ENCODE measurements at regions of chr4 and their contacts with region 1.

Region 1: GRCh38 chr4:24404281-24404680 is 180.1 kb downstream of the DHX15 start:
- DNase-seq: no peak
- H3K4me3 ChIP-seq: no peak overlapping the region
- H3K27ac ChIP-seq: no peak overlapping the region
- H3K4me1 ChIP-seq: no peaks in the 10 kb centered on the region
- H3K27me3 ChIP-seq: no peaks in the 10 kb centered on the region
- CTCF ChIP-seq: no peak

Region 2: GRCh38 chr4:23324021-23324690 is 1080.1 kb before region 1 on chr4:
- CTCF ChIA-PET with region 1: no interaction called
- POLR2A ChIA-PET with region 1: no interaction called
- intact Hi-C with region 1: no loop called
- DNase-seq: no peak
- H3K4me3 ChIP-seq: no peak overlapping the region
- H3K27ac ChIP-seq: no peak overlapping the region
- H3K4me1 ChIP-seq: no peaks in the 10 kb centered on the region
- H3K27me3 ChIP-seq: no peaks in the 10 kb centered on the region
- CTCF ChIP-seq: no peak

Region 3: GRCh38 chr4:24164054-24164693 is 240.1 kb before region 1 on chr4:
- CTCF ChIA-PET with region 1: no interaction called
- POLR2A ChIA-PET with region 1: no interaction called
- intact Hi-C with region 1: no loop called
- DNase-seq: no peak
- H3K4me3 ChIP-seq: no peak overlapping the region
- H3K27ac ChIP-seq: no peak overlapping the region
- H3K4me1 ChIP-seq: no peaks in the 10 kb centered on the region
- H3K27me3 ChIP-seq: peaks cover 3% of the 10 kb centered on the region
- CTCF ChIP-seq: no peak

Region 4: GRCh38 chr4:24453951-24454350 is 49.7 kb after region 1 on chr4:
- CTCF ChIA-PET with region 1: no interaction called
- POLR2A ChIA-PET with region 1: interaction called, 10 read pairs
- intact Hi-C with region 1: no loop called
- DNase-seq: no peak
- H3K4me3 ChIP-seq: no peak overlapping the region
- H3K27ac ChIP-seq: no peak overlapping the region
- H3K4me1 ChIP-seq: no peaks in the 10 kb centered on the region
- H3K27me3 ChIP-seq: no peaks in the 10 kb centered on the region
- CTCF ChIP-seq: no peak

Region 5: DNA sequence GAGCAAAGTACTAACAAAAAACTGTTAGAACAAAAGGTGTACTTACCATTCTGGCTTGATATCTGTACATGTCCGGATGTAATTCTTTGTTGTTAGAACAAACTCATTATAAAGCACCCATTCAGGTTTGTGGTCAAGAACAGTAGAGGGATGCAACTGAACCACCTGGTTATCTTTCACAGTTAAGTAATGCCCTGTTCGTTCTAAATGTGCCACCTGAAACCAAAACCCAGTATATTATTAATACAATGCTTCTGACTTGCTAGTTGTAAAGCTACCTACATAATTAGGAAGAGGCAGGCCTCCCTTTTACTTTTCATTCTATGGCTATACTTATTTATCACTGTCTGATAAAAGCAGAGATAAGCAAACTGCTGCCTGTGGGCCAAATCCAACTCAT is 125.3 kb after region 1 on chr4:
- CTCF ChIA-PET with region 1: no interaction called
- POLR2A ChIA-PET with region 1: no interaction called
- intact Hi-C with region 1: no loop called
- DNase-seq: no peak
- H3K4me3 ChIP-seq: no peak overlapping the region
- H3K27ac ChIP-seq: no peak overlapping the region
- H3K4me1 ChIP-seq: no peaks in the 10 kb centered on the region
- H3K27me3 ChIP-seq: no peaks in the 10 kb centered on the region
- CTCF ChIP-seq: no peak

Measured in A673 (cell line).